B cell (primary cell): ENCODE measurements at regions of chr3 and their contacts with region 1.

Region 1: GRCh38 chr3:100590114-100590839 is 19.1 kb upstream of the ADGRG7 start:
- DNase-seq: peak; percentile 78
- ATAC-seq: peak; percentile 86
- H3K4me3 ChIP-seq: peak overlapping the region in 1 of 5 experiments; percentile 34
- H3K4me3 Mint-ChIP-seq: peak overlapping the region; percentile 5
- H3K27ac ChIP-seq: no peak overlapping the region
- H3K27ac Mint-ChIP-seq: no peak overlapping the region
- H3K4me1 ChIP-seq: peaks cover 0 to 5% of the 10 kb centered on the region in 2 donors
- H3K4me1 Mint-ChIP-seq: peaks cover 3% of the 10 kb centered on the region
- H3K27me3 ChIP-seq: no peaks in the 10 kb centered on the region
- H3K27me3 Mint-ChIP-seq: no peaks in the 10 kb centered on the region
- CTCF ChIP-seq: peak; percentile 92

Region 2: DNA sequence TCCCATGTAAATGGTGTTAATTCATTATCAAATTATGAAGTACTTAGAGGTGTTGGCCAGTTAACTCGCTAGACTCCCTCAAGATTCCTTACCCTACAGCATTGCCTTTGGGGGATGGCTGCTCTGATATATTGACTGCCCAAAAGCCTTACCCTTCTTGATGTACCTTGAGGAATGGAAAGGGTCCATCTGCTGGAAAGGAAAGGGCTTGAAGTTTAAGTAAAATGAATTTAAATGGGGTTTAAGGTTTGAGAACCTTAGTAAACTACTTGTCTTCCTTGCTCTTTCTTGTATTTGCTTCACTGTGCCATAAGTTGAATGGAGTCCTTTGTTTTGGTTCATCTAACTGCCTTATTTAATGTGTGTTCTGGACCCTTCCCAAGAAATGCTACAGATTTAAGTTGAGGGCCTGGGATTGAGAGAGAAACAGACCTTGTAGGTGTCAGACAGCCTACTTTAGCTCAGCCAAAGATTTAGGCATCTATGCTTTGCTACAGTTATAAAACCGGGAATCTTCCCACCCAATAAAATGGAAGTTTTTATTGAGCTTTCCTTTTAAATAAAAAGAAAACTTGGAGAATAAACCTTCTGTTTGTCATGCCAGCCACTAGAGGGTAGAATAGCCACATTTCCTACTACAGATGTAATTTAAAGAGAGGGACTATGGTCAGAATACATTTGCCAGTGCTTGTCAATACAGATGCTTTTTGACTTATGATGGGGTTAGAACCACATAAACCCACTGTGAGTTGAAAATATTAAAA is 747.3 kb before region 1 on chr3:
- CTCF ChIA-PET with region 1: interaction called, 10 read pairs
- POLR2A ChIA-PET with region 1: no interaction called
- intact Hi-C with region 1: no loop called
- DNase-seq: peak; percentile 39
- ATAC-seq: no peak
- H3K4me3 ChIP-seq: no peak overlapping the region
- H3K4me3 Mint-ChIP-seq: no peak overlapping the region
- H3K27ac ChIP-seq: no peak overlapping the region
- H3K27ac Mint-ChIP-seq: no peak overlapping the region
- H3K4me1 ChIP-seq: peaks cover 8 to 10% of the 10 kb centered on the region in 2 donors
- H3K4me1 Mint-ChIP-seq: peaks cover 14% of the 10 kb centered on the region
- H3K27me3 ChIP-seq: no peaks in the 10 kb centered on the region
- H3K27me3 Mint-ChIP-seq: no peaks in the 10 kb centered on the region
- CTCF ChIP-seq: peak; percentile 60

Region 3: DNA sequence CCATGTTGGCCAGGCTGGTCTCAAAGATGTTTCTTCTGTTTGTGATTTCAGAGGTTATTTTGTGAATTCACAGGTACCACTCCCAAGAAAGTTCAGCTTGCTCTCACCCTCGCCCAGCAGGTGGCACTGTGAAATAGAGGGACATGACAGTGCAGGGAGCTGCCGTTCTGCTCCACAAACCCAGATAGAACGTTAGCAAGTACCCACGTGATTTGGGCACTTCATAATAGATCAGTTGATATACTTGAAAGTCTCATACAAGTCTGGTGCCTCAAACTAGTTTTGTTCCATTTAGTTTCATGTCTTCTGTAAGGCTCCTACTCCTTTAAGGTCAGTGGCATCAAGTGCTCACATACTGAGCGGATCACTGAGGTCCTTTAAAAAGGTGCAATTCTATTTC is 521.5 kb before region 1 on chr3:
- CTCF ChIA-PET with region 1: interaction called, 7 read pairs
- POLR2A ChIA-PET with region 1: no interaction called
- intact Hi-C with region 1: loop called (anchors 1 kb)
- DNase-seq: peak; percentile 84
- ATAC-seq: peak; percentile 95
- H3K4me3 ChIP-seq: no peak overlapping the region
- H3K4me3 Mint-ChIP-seq: peak overlapping the region; percentile 53
- H3K27ac ChIP-seq: no peak overlapping the region
- H3K27ac Mint-ChIP-seq: peak overlapping the region; percentile 57
- H3K4me1 ChIP-seq: peaks cover 37% of the 10 kb centered on the region in 2 donors
- H3K4me1 Mint-ChIP-seq: peaks cover 42% of the 10 kb centered on the region
- H3K27me3 ChIP-seq: no peaks in the 10 kb centered on the region
- H3K27me3 Mint-ChIP-seq: no peaks in the 10 kb centered on the region
- CTCF ChIP-seq: peak; percentile 86

Region 4: GRCh38 chr3:100316641-100317069 is 273.6 kb before region 1 on chr3:
- CTCF ChIA-PET with region 1: interaction called, 46 read pairs
- POLR2A ChIA-PET with region 1: no interaction called
- intact Hi-C with region 1: loop called (anchors 1 kb)
- DNase-seq: peak; percentile 62
- ATAC-seq: peak; percentile 60
- H3K4me3 ChIP-seq: no peak overlapping the region
- H3K4me3 Mint-ChIP-seq: no peak overlapping the region
- H3K27ac ChIP-seq: no peak overlapping the region
- H3K27ac Mint-ChIP-seq: no peak overlapping the region
- H3K4me1 ChIP-seq: peaks cover 0 to 5% of the 10 kb centered on the region in 2 donors
- H3K4me1 Mint-ChIP-seq: no peaks in the 10 kb centered on the region
- H3K27me3 ChIP-seq: no peaks in the 10 kb centered on the region
- H3K27me3 Mint-ChIP-seq: no peaks in the 10 kb centered on the region
- CTCF ChIP-seq: peak; percentile 75

Region 5: GRCh38 chr3:100463002-100463401 is 127.3 kb before region 1 on chr3:
- CTCF ChIA-PET with region 1: interaction called, 16 read pairs
- POLR2A ChIA-PET with region 1: no interaction called
- intact Hi-C with region 1: loop called (anchors 1 kb)
- DNase-seq: peak; percentile 14
- ATAC-seq: no peak
- H3K4me3 ChIP-seq: no peak overlapping the region
- H3K4me3 Mint-ChIP-seq: no peak overlapping the region
- H3K27ac ChIP-seq: no peak overlapping the region
- H3K27ac Mint-ChIP-seq: no peak overlapping the region
- H3K4me1 ChIP-seq: no peaks in the 10 kb centered on the region
- H3K4me1 Mint-ChIP-seq: no peaks in the 10 kb centered on the region
- H3K27me3 ChIP-seq: peaks cover 0 to 4% (median 0%) of the 10 kb centered on the region in 4 experiments
- H3K27me3 Mint-ChIP-seq: no peaks in the 10 kb centered on the region
- CTCF ChIP-seq: peak; percentile 41

Region 6: GRCh38 chr3:100603469-100603868 is 13.2 kb after region 1 on chr3:
- CTCF ChIA-PET with region 1: interaction called, 29 read pairs
- POLR2A ChIA-PET with region 1: no interaction called
- intact Hi-C with region 1: no loop called
- DNase-seq: no peak
- ATAC-seq: peak; percentile 40
- H3K4me3 ChIP-seq: peak overlapping the region; percentile 31 to 59 (median 46)
- H3K4me3 Mint-ChIP-seq: peak overlapping the region; percentile 87
- H3K27ac ChIP-seq: peak overlapping the region; percentile 72 to 80
- H3K27ac Mint-ChIP-seq: peak overlapping the region; percentile 93
- H3K4me1 ChIP-seq: peaks cover 17 to 26% of the 10 kb centered on the region in 2 donors
- H3K4me1 Mint-ChIP-seq: peaks cover 27% of the 10 kb centered on the region
- H3K27me3 ChIP-seq: peaks cover 0 to 9% (median 0%) of the 10 kb centered on the region in 4 experiments
- H3K27me3 Mint-ChIP-seq: peaks cover 8% of the 10 kb centered on the region
- CTCF ChIP-seq: peak; percentile 25